ENCODE measurements at regions of chr7 and their contacts with region 1.

Region 1: GRCh38 chr7:31735991-31736982 is 49.3 kb downstream of the PPP1R17 start:
- H3K4me3 ChIP-seq: no peak overlapping the region
- H3K27ac ChIP-seq: no peak overlapping the region
- H3K4me1 ChIP-seq: no peaks in the 10 kb centered on the region
- CTCF ChIP-seq: peak; percentile 53; the same call in 1 of the 2 replicates

Region 2: DNA sequence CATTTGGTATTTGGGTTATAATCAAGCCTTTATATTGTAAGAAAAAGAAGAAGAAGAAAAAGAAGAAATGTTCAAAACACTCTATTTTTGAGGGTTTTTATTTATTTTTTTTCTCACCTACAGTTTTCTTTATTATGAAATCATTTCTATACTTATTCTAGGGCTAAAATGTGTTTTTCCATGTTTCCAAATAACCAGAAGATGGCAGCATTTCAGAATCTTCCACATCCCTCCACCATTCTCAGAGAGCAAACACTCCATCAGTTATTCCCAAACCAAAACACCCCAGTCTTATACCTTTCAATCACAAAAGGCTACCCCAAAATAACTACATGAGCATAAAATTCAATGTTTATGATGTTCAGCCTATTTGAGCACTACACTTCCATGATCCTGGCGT is 88.0 kb before region 1 on chr7:
- CTCF ChIA-PET with region 1: interaction called, 11 read pairs
- POLR2A ChIA-PET with region 1: no interaction called
- H3K4me3 ChIP-seq: no peak overlapping the region
- H3K27ac ChIP-seq: no peak overlapping the region
- H3K4me1 ChIP-seq: no peaks in the 10 kb centered on the region
- CTCF ChIP-seq: no peak

Region 3: DNA sequence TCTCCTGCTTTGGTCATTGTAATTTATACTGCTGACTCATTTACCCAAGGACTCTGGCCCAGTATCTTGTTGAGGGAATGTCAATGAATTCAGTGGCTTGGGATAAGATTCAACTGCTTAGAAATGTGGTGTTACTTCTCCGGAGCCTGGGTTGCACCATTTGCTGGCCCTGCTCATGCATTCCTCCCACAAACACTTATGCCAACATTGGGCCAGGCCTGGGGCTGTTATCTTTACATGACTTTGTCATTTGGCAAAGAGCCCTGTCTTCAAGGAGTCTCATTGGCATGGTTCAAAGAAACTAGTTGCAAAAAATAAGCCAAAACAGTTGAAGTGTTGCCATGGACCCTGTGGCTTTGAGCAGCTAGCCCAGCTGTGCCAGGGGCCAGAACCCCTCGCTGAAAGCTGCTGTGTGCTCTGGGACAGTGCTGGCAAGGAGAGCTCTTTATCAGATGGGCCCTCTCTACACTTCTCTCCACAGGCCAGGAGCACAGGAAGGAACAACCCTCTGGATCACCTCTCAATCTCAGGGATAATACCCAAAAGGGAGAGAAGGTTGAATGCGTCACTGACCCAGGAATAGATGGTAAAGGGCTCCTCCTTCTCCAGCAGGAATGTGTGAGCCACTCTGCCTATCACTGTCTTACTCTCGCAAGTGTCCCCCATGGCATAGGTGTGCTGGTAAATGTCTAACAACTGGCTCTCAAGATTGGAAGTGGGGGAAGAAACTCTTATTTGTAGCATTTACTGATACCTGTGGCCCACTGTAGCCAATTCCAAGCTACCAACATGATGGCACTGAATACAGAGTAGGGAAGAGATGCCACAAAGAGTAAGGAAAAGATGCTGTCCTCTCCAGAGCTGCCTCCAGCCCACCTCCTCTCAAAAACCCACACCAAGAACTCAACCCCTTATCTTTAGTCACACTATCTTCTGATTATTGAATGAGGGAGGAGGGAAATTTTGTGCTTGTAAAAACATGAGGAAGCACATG is 357.4 kb after region 1 on chr7:
- CTCF ChIA-PET with region 1: no interaction called
- POLR2A ChIA-PET with region 1: no interaction called
- H3K4me3 ChIP-seq: no peak overlapping the region
- H3K27ac ChIP-seq: no peak overlapping the region
- H3K4me1 ChIP-seq: no peaks in the 10 kb centered on the region
- CTCF ChIP-seq: no peak

Measured in HEK293 (cell line).